Activated CD4-positive, alpha-beta memory T cell treated with anti-CD3 and anti-CD28 coated beads for 36 hours (primary cell): ENCODE measurements at regions of chr20 and their contacts with region 1.

Region 1: GRCh38 chr20:25696384-25697131 is at the start of gene ZNF337:
- DNase-seq: peak; percentile 97
- H3K4me3 Mint-ChIP-seq: peak within 1 kb of the TSS; percentile 89
- H3K27ac Mint-ChIP-seq: peak within 1 kb of the TSS; percentile 77
- H3K4me1 Mint-ChIP-seq: peaks cover 21% of the 10 kb centered on the region
- H3K27me3 Mint-ChIP-seq: no peaks in the 10 kb centered on the region
- total RNA-seq, gene ZNF337: 12.1 to 12.5 TPM

Region 2: DNA sequence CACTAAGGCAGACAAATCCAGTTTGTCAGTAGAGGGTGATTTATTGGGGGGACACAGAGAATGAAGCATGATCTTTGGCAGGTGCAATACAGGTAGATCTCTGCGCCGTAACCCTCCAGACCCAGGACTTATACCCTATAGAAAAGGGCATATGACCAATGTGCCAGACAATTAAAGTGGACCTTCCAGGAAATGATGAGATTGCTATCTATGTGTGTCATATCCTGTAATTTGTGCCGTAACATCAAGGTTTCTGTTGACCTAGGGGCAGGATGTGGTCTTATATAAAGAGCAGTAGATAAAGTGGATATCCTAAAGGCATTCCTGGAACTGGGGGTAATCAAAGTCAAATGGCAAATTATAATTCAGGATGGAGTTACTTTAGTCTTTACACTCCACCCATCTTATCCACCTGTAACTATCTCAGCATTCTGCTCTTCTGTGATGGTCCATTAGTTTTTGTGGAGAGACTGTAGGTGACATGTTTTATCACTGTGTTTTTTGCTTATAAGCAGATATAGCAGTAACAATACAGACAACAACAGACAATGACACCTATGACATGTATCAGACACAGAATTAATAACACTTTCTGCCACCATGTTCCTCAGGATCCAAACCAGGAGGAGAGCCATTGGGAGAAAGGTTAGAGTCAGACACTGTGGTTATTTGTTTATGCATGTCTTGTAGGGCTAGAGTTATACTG is 43.2 kb after region 1 on chr20:
- CTCF ChIA-PET with region 1: interaction called, 3 read pairs
- POLR2A ChIA-PET with region 1: no interaction called
- intact Hi-C with region 1: loop called (anchors 1 kb)
- DNase-seq: no peak
- H3K4me3 Mint-ChIP-seq: no peak overlapping the region
- H3K27ac Mint-ChIP-seq: peak overlapping the region; percentile 35
- H3K4me1 Mint-ChIP-seq: peaks cover 17% of the 10 kb centered on the region
- H3K27me3 Mint-ChIP-seq: no peaks in the 10 kb centered on the region

Region 3: DNA sequence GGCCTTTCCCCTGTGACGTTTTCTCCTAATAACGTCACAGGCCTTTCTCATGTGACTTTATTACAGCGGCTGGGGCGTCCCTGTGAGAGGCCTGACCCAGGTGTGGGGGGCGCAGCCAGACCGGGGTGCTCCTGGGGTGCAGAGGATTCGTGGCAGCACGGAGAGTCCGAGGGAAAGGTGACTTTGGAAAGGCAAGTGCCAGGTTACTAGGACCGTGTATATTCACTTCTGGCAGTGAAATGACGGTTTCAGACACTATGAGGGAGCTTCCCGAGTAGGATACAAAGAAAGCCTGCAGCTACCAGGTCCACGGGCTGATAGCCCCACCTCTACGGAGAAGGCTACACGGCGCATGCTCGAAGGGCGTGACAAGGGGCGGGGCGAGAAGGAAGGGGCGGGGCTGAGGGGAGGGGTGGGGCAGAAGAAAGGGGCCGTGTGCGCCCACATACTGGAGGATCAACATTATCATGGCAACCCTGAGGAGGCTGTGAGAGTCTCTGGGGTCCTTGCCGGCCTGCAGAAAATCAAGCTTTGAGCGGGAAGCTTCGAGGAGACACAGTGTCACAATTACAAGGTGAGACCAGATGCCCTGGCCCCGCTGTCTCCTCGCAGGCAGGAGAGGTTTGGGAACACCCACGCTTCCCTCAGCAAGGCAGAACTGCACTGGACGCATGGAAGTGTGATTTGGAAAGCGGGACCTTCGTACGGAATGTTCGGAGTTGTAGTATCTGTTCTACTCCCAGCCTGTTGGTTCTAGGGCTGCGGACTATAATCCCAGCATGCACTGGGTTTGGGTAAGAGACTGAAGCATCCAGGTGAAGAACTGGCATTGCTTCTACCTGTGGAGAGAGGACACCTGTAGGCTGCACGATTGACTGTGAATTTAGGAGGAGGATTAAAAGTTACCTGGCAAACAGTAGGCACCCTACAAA is 54.5 kb after region 1 on chr20:
- CTCF ChIA-PET with region 1: no interaction called
- POLR2A ChIA-PET with region 1: no interaction called
- intact Hi-C with region 1: loop called (anchors 2 kb)
- DNase-seq: peak; percentile 80
- H3K4me3 Mint-ChIP-seq: peak overlapping the region; percentile 82
- H3K27ac Mint-ChIP-seq: peak overlapping the region; percentile 58
- H3K4me1 Mint-ChIP-seq: peaks cover 18% of the 10 kb centered on the region
- H3K27me3 Mint-ChIP-seq: no peaks in the 10 kb centered on the region